H1 (cell line): ENCODE measurements at regions of chr3 and their contacts with region 1.

Region 1: GRCh38 chr3:100825574-100825973 is 116.3 kb downstream of the TFG start:
- DNase-seq: no peak
- H3K4me3 ChIP-seq: no peak overlapping the region
- H3K27ac ChIP-seq: no peak overlapping the region
- H3K4me1 ChIP-seq: no peaks in the 10 kb centered on the region
- H3K27me3 ChIP-seq: no peaks in the 10 kb centered on the region
- CTCF ChIP-seq: no peak
- EP300 ChIP-seq: no peak
- POLR2A ChIP-seq: no peak
- RAD21 ChIP-seq: no peak

Region 2: GRCh38 chr3:100810671-100811070 is 14.9 kb before region 1 on chr3:
- CTCF ChIA-PET with region 1: interaction called, 14 read pairs
- POLR2A ChIA-PET with region 1: no interaction called
- DNase-seq: no peak
- H3K4me3 ChIP-seq: no peak overlapping the region
- H3K27ac ChIP-seq: no peak overlapping the region
- H3K4me1 ChIP-seq: no peaks in the 10 kb centered on the region
- H3K27me3 ChIP-seq: no peaks in the 10 kb centered on the region
- CTCF ChIP-seq: no peak
- EP300 ChIP-seq: no peak
- POLR2A ChIP-seq: no peak
- RAD21 ChIP-seq: no peak